SK-N-SH (cell line): ENCODE measurements at regions of chr14 and their contacts with region 1.

Region 1: GRCh38 chr14:66493750-66494149 is 7.6 kb downstream of the CCDC196 start:
- DNase-seq: peak; percentile 15
- H3K4me3 ChIP-seq: no peak overlapping the region
- H3K27ac ChIP-seq: no peak overlapping the region; a peak in 1 of 4 replicates
- H3K4me1 ChIP-seq: peaks cover 0 to 5% of the 10 kb centered on the region in 2 experiments; a peak in 2 of 4 replicates
- H3K27me3 ChIP-seq: no peaks in the 10 kb centered on the region
- CTCF ChIP-seq: no peak
- EP300 ChIP-seq: peak in 1 of 2 experiments; percentile 71; a peak in 1 of 4 replicates
- RAD21 ChIP-seq: no peak

Region 2: GRCh38 chr14:66342429-66342828 is 151.3 kb before region 1 on chr14:
- CTCF ChIA-PET with region 1: no interaction called
- POLR2A ChIA-PET with region 1: no interaction called
- DNase-seq: no peak
- H3K4me3 ChIP-seq: no peak overlapping the region
- H3K27ac ChIP-seq: no peak overlapping the region
- H3K4me1 ChIP-seq: no peaks in the 10 kb centered on the region
- H3K27me3 ChIP-seq: no peaks in the 10 kb centered on the region
- CTCF ChIP-seq: no peak
- EP300 ChIP-seq: no peak
- RAD21 ChIP-seq: no peak

Region 3: DNA sequence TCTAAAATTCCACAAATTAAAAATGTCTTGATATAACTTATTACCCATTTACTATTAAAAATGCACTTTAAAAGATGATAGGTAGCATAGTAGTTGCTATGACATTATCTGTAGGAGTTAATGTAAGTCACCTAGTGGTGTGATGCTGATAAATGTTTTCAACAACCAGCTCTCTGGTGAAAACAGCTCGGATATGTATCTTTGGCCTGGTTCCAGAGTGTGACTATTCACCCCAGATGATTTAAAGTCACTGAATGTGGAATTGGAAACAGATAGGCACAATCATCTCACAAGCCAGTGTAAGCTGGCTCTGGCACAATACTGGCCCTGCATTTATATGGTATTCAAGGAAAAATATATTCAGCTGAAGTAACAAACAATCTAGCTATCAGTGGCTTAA is 16.8 kb before region 1 on chr14:
- CTCF ChIA-PET with region 1: interaction called, 10 read pairs
- POLR2A ChIA-PET with region 1: no interaction called
- DNase-seq: peak; percentile 52
- H3K4me3 ChIP-seq: no peak overlapping the region
- H3K27ac ChIP-seq: peak overlapping the region in 1 of 2 experiments; percentile 47; a peak in 2 of 4 replicates
- H3K4me1 ChIP-seq: peaks cover 0 to 4% of the 10 kb centered on the region in 2 experiments; a peak in 2 of 4 replicates
- H3K27me3 ChIP-seq: no peaks in the 10 kb centered on the region
- CTCF ChIP-seq: peak; percentile 27
- EP300 ChIP-seq: peak in 1 of 2 experiments; percentile 81; a peak in 2 of 4 replicates
- RAD21 ChIP-seq: no peak; the same call in 1 of the 2 replicates

Region 4: GRCh38 chr14:66610154-66610563 is 116.4 kb after region 1 on chr14:
- CTCF ChIA-PET with region 1: no interaction called
- POLR2A ChIA-PET with region 1: no interaction called
- DNase-seq: no peak
- H3K4me3 ChIP-seq: peak overlapping the region in 1 of 2 experiments; percentile 30; a peak in 1 of 4 replicates
- H3K27ac ChIP-seq: no peak overlapping the region
- H3K4me1 ChIP-seq: no peaks in the 10 kb centered on the region
- H3K27me3 ChIP-seq: no peaks in the 10 kb centered on the region
- CTCF ChIP-seq: peak; percentile 37; the same call in 1 of the 2 replicates
- EP300 ChIP-seq: no peak
- RAD21 ChIP-seq: no peak; the same call in 1 of the 2 replicates

Region 5: GRCh38 chr14:66746316-66747006 is 252.7 kb after region 1 on chr14:
- CTCF ChIA-PET with region 1: no interaction called
- POLR2A ChIA-PET with region 1: no interaction called
- DNase-seq: peak; percentile 31
- H3K4me3 ChIP-seq: no peak overlapping the region
- H3K27ac ChIP-seq: no peak overlapping the region
- H3K4me1 ChIP-seq: no peaks in the 10 kb centered on the region; a peak in 1 of 4 replicates
- H3K27me3 ChIP-seq: no peaks in the 10 kb centered on the region
- CTCF ChIP-seq: peak; percentile 67
- EP300 ChIP-seq: no peak
- RAD21 ChIP-seq: peak; percentile 54